Activated CD4-positive, alpha-beta T cell treated with anti-CD3 and anti-CD28 coated beads for 36 hours (primary cell): ENCODE measurements at regions of chr2 and their contacts with region 1.

Region 1: DNA sequence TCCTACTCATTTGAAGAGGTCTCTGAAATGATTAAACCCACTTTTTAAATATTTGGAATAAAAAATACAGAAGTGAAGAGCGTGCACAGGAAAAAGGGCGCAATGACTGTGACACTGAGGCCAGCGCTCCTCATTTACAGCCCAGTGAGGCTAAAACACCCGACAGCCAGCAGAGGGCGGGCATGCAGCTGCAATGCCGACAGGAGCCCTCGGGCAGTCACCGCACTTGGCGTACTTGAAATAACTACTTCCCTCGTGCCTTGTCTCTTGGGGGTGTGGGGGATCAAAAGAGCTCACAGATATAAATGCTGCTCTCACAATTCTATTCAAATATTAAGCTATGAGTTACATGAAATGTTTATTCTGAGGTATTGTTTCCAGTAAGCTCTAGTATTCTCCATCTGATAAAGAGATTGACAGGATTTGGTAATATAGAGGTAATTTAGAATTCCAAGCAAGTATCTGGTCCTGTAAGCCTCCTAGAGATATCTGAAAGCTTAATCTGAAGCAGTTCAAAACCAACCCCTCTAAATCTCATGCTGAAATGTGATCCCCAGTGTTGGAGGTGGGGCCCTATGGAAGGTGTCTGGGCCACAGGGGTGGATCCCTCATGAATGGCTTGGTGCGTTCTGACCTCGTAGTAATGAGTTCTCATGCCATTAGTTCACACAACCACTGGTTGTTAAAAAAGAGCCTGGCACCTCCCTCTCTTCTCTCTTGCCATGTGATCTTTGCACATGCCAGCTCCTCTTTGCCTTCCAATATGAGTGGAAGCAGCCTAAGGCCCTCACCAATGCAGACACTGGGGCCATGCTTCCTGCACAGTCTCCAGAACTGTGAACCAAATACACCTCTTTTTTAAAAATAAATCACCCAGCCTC is 93.6 kb downstream of the ZAP70 start:
- DNase-seq: peak; percentile 91
- ATAC-seq: peak; percentile 98
- H3K4me3 Mint-ChIP-seq: no peak overlapping the region
- H3K27ac Mint-ChIP-seq: no peak overlapping the region
- H3K4me1 Mint-ChIP-seq: peaks cover 2% of the 10 kb centered on the region
- H3K27me3 Mint-ChIP-seq: no peaks in the 10 kb centered on the region

Region 2: GRCh38 chr2:97819754-97820153 is 12.8 kb after region 1 on chr2:
- CTCF ChIA-PET with region 1: interaction called, 13 read pairs
- POLR2A ChIA-PET with region 1: no interaction called
- intact Hi-C with region 1: no loop called
- DNase-seq: no peak
- ATAC-seq: no peak
- H3K4me3 Mint-ChIP-seq: no peak overlapping the region
- H3K27ac Mint-ChIP-seq: no peak overlapping the region
- H3K4me1 Mint-ChIP-seq: no peaks in the 10 kb centered on the region
- H3K27me3 Mint-ChIP-seq: no peaks in the 10 kb centered on the region

Region 3: GRCh38 chr2:98157557-98157956 is 350.6 kb after region 1 on chr2:
- CTCF ChIA-PET with region 1: no interaction called
- POLR2A ChIA-PET with region 1: no interaction called
- intact Hi-C with region 1: loop called in 1 of 2 experiments (anchors 10 kb)
- DNase-seq: no peak
- ATAC-seq: no peak
- H3K4me3 Mint-ChIP-seq: no peak overlapping the region
- H3K27ac Mint-ChIP-seq: no peak overlapping the region
- H3K4me1 Mint-ChIP-seq: no peaks in the 10 kb centered on the region
- H3K27me3 Mint-ChIP-seq: peaks cover 9% of the 10 kb centered on the region

Region 4: DNA sequence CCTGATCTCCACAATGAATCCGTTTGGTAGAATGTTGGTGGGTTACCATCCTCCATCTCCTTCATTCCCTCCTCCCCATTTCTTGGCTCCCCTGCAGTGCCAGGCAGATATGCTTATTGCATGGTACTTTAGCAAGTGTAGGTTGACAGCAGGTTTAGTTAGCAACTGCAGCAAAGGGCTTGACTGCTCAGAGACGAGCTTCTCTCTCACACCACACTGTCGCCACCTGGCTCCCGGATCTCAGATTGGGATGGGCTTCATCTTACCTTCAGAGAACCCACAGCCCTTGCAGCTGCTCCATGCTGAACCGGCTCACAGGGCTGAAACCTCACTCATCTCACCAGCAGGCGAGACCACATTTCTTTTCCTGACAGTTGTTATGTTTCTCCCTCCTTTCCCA is 368.8 kb after region 1 on chr2:
- CTCF ChIA-PET with region 1: interaction called, 3 read pairs
- POLR2A ChIA-PET with region 1: no interaction called
- intact Hi-C with region 1: loop called in 1 of 2 experiments (anchors 2 kb)
- DNase-seq: peak; percentile 45
- ATAC-seq: peak; percentile 53
- H3K4me3 Mint-ChIP-seq: no peak overlapping the region
- H3K27ac Mint-ChIP-seq: no peak overlapping the region
- H3K4me1 Mint-ChIP-seq: no peaks in the 10 kb centered on the region
- H3K27me3 Mint-ChIP-seq: peaks cover 46% of the 10 kb centered on the region

Region 5: GRCh38 chr2:98188351-98189049 is 381.5 kb after region 1 on chr2:
- CTCF ChIA-PET with region 1: interaction called, 12 read pairs
- POLR2A ChIA-PET with region 1: no interaction called
- intact Hi-C with region 1: no loop called
- DNase-seq: no peak
- ATAC-seq: no peak
- H3K4me3 Mint-ChIP-seq: no peak overlapping the region
- H3K27ac Mint-ChIP-seq: no peak overlapping the region
- H3K4me1 Mint-ChIP-seq: no peaks in the 10 kb centered on the region
- H3K27me3 Mint-ChIP-seq: peaks cover 5% of the 10 kb centered on the region

Region 6: DNA sequence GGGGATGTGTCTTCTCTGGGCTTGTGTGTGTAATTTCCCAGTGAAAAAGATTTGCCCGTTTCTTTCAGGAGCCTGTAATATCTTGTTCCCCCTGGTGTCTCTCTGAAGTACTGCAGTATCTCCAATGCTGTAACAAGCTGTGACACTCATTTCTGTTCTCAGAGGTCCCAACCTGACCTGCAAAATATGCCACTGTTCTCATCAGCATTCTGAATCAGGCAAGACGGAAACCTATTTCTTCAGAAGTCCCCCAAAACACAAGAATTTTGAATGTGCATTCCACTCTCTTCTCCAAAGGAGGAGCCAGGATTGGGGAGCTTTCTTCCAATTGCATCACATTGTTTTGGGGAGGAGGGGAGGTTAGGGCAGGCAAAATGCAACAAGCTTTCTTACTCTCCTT is 462.3 kb after region 1 on chr2:
- CTCF ChIA-PET with region 1: interaction called, 12 read pairs
- POLR2A ChIA-PET with region 1: no interaction called
- intact Hi-C with region 1: loop called (anchors 1 kb)
- DNase-seq: peak; percentile 20
- ATAC-seq: peak; percentile 65
- H3K4me3 Mint-ChIP-seq: no peak overlapping the region
- H3K27ac Mint-ChIP-seq: no peak overlapping the region
- H3K4me1 Mint-ChIP-seq: no peaks in the 10 kb centered on the region
- H3K27me3 Mint-ChIP-seq: peaks cover under 1% of the 10 kb centered on the region

Region 7: GRCh38 chr2:98385050-98385699 is 578.2 kb after region 1 on chr2:
- CTCF ChIA-PET with region 1: interaction called, 29 read pairs
- POLR2A ChIA-PET with region 1: no interaction called
- intact Hi-C with region 1: loop called (anchors 1 to 2 kb)
- DNase-seq: peak; percentile 88
- ATAC-seq: peak; percentile 89
- H3K4me3 Mint-ChIP-seq: no peak overlapping the region
- H3K27ac Mint-ChIP-seq: no peak overlapping the region
- H3K4me1 Mint-ChIP-seq: peaks cover 3% of the 10 kb centered on the region
- H3K27me3 Mint-ChIP-seq: peaks cover 5% of the 10 kb centered on the region